Calu3 (cell line): ENCODE measurements at regions of chr10 and their contacts with region 1.

Region 1: DNA sequence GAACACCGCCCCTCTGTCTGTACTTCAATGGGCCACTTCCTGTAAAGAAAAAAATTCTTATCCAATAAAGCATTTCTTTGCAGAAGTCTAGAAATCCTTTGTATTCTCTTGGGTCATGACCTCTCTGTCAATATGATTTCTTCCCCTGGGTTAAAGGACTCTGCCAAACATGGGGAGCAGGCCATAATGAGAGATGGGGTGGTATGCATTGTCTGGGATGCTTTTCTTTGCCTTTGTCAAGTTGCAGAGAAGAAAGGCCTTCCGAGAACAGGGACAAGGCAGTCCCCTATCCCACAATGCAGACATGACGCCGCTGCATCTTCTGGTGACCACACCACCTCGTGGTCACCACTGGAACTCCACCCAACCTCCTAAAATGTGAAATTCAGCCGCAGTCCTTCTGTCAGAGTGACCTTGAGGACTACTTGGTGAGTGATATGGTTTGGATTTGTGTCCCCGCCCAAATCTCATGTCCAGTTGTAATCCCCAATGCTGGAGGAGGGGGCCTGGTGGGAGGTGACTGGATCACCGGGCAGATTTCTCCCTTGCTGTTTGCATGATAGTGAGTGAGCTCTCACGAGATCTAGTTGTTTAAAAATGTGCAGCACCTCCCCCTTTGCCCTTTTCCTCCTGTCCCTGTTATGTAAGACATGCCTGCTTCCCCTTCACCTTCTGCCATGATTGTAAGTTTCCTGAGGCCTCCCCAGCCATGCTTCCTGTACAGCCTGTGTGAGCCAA is 15.2 kb upstream of the FRMPD2 start:
- DNase-seq: peak; percentile 69
- H3K4me3 Mint-ChIP-seq: no peak overlapping the region
- H3K27ac Mint-ChIP-seq: no peak overlapping the region
- H3K4me1 Mint-ChIP-seq: peaks cover 44% of the 10 kb centered on the region
- H3K27me3 Mint-ChIP-seq: peaks cover 23% of the 10 kb centered on the region
- CTCF ChIP-seq: peak; percentile 80

Region 2: GRCh38 chr10:48215488-48216204 is 74.0 kb before region 1 on chr10:
- CTCF ChIA-PET with region 1: no interaction called
- intact Hi-C with region 1: loop called (anchors 2 kb)
- DNase-seq: peak; percentile 73
- H3K4me3 Mint-ChIP-seq: no peak overlapping the region
- H3K27ac Mint-ChIP-seq: no peak overlapping the region
- H3K4me1 Mint-ChIP-seq: no peaks in the 10 kb centered on the region
- H3K27me3 Mint-ChIP-seq: peaks cover 69% of the 10 kb centered on the region
- CTCF ChIP-seq: peak; percentile 73

Region 3: GRCh38 chr10:48257407-48257961 is 32.2 kb before region 1 on chr10:
- CTCF ChIA-PET with region 1: no interaction called
- intact Hi-C with region 1: loop called (anchors 1 kb)
- DNase-seq: no peak
- H3K4me3 Mint-ChIP-seq: no peak overlapping the region
- H3K27ac Mint-ChIP-seq: no peak overlapping the region
- H3K4me1 Mint-ChIP-seq: peaks cover 18% of the 10 kb centered on the region
- H3K27me3 Mint-ChIP-seq: peaks cover 32% of the 10 kb centered on the region
- CTCF ChIP-seq: no peak

Region 4: GRCh38 chr10:48958598-48959190 is 669.0 kb after region 1 on chr10:
- CTCF ChIA-PET with region 1: no interaction called
- intact Hi-C with region 1: no loop called
- DNase-seq: no peak
- H3K4me3 Mint-ChIP-seq: no peak overlapping the region
- H3K27ac Mint-ChIP-seq: no peak overlapping the region
- H3K4me1 Mint-ChIP-seq: no peaks in the 10 kb centered on the region
- H3K27me3 Mint-ChIP-seq: peaks cover 65% of the 10 kb centered on the region
- CTCF ChIP-seq: no peak

Region 5: GRCh38 chr10:49309626-49310411 is 1020.1 kb after region 1 on chr10:
- CTCF ChIA-PET with region 1: no interaction called
- intact Hi-C with region 1: no loop called
- DNase-seq: no peak
- H3K4me3 Mint-ChIP-seq: no peak overlapping the region
- H3K27ac Mint-ChIP-seq: no peak overlapping the region
- H3K4me1 Mint-ChIP-seq: no peaks in the 10 kb centered on the region
- H3K27me3 Mint-ChIP-seq: peaks cover 85% of the 10 kb centered on the region
- CTCF ChIP-seq: no peak